ENCODE measurements at regions of chr20 and their contacts with region 1.

Region 1: GRCh38 chr20:49797344-49797615 is 15.3 kb upstream of the SLC9A8 start:
- DNase-seq: no peak
- ATAC-seq: no peak
- H3K4me3 ChIP-seq: no peak overlapping the region
- H3K4me3 Mint-ChIP-seq: no peak overlapping the region
- H3K27ac ChIP-seq: no peak overlapping the region
- H3K27ac Mint-ChIP-seq: peak overlapping the region; percentile 26
- H3K4me1 ChIP-seq: peaks cover 46 to 54% of the 10 kb centered on the region in 2 donors
- H3K4me1 Mint-ChIP-seq: peaks cover 46% of the 10 kb centered on the region
- H3K27me3 ChIP-seq: peaks cover 0 to 14% (median 7%) of the 10 kb centered on the region in 4 experiments
- H3K27me3 Mint-ChIP-seq: peaks cover 16% of the 10 kb centered on the region
- CTCF ChIP-seq: no peak

Region 2: GRCh38 chr20:49620364-49621240 is 176.7 kb before region 1 on chr20:
- CTCF ChIA-PET with region 1: no interaction called
- POLR2A ChIA-PET with region 1: no interaction called
- intact Hi-C with region 1: loop called (anchors 5 kb)
- DNase-seq: peak; percentile 63
- ATAC-seq: peak; percentile 82
- H3K4me3 ChIP-seq: peak overlapping the region in 3 of 5 experiments; percentile 4 to 31 (median 27)
- H3K4me3 Mint-ChIP-seq: no peak overlapping the region
- H3K27ac ChIP-seq: peak overlapping the region; percentile 5 to 16
- H3K27ac Mint-ChIP-seq: no peak overlapping the region
- H3K4me1 ChIP-seq: peaks cover 27 to 37% of the 10 kb centered on the region in 2 donors
- H3K4me1 Mint-ChIP-seq: peaks cover 9% of the 10 kb centered on the region
- H3K27me3 ChIP-seq: peaks cover 0 to 4% (median 0%) of the 10 kb centered on the region in 4 experiments
- H3K27me3 Mint-ChIP-seq: peaks cover 1% of the 10 kb centered on the region
- CTCF ChIP-seq: no peak

Region 3: GRCh38 chr20:49668181-49668877 is 129.0 kb before region 1 on chr20:
- CTCF ChIA-PET with region 1: interaction called, 3 read pairs
- POLR2A ChIA-PET with region 1: interaction called, 3 read pairs
- intact Hi-C with region 1: loop called (anchors 1 kb)
- DNase-seq: peak; percentile 78
- ATAC-seq: peak; percentile 92
- H3K4me3 ChIP-seq: peak overlapping the region in 1 of 5 experiments; percentile 8
- H3K4me3 Mint-ChIP-seq: peak overlapping the region; percentile 81
- H3K27ac ChIP-seq: no peak overlapping the region
- H3K27ac Mint-ChIP-seq: peak overlapping the region; percentile 54
- H3K4me1 ChIP-seq: peaks cover 21 to 22% of the 10 kb centered on the region in 2 donors
- H3K4me1 Mint-ChIP-seq: peaks cover 38% of the 10 kb centered on the region
- H3K27me3 ChIP-seq: no peaks in the 10 kb centered on the region
- H3K27me3 Mint-ChIP-seq: no peaks in the 10 kb centered on the region
- CTCF ChIP-seq: no peak

Region 4: DNA sequence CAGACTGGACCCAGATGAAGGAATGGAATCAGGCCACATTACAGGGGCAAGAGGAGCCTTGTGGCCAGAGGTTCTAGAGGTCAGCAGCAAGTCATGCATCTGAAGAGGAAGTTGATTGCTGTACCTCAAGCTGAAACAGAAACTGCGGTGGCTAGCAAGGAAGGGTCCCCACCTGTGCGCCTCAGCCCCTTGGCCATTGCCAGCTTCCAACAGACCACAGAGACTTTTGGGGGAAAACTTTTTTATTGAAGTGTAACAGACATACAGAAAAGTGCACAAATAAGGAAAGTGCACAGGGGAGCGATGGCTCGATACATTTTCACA is 11.5 kb before region 1 on chr20:
- CTCF ChIA-PET with region 1: interaction called, 5 read pairs
- POLR2A ChIA-PET with region 1: no interaction called
- intact Hi-C with region 1: loop called (anchors 2 kb)
- DNase-seq: peak; percentile 64
- ATAC-seq: peak; percentile 74
- H3K4me3 ChIP-seq: peak overlapping the region; percentile 11 to 42 (median 25)
- H3K4me3 Mint-ChIP-seq: peak overlapping the region; percentile 89
- H3K27ac ChIP-seq: peak overlapping the region; percentile 48 to 58
- H3K27ac Mint-ChIP-seq: peak overlapping the region; percentile 92
- H3K4me1 ChIP-seq: peaks cover 36 to 54% of the 10 kb centered on the region in 2 donors
- H3K4me1 Mint-ChIP-seq: peaks cover 44% of the 10 kb centered on the region
- H3K27me3 ChIP-seq: no peaks in the 10 kb centered on the region
- H3K27me3 Mint-ChIP-seq: no peaks in the 10 kb centered on the region
- CTCF ChIP-seq: no peak

Measured in B cell (primary cell).